ENCODE measurements at regions of chr12 and their contacts with region 1.

Region 1: GRCh38 chr12:11868027-11868426 is 202.7 kb upstream of the BCL2L14 start:
- DNase-seq: peak; percentile 25
- H3K4me3 Mint-ChIP-seq: no peak overlapping the region
- H3K27ac Mint-ChIP-seq: peak overlapping the region; percentile 70
- H3K4me1 Mint-ChIP-seq: peaks cover 51% of the 10 kb centered on the region
- H3K27me3 Mint-ChIP-seq: no peaks in the 10 kb centered on the region

Region 2: GRCh38 chr12:11545484-11546330 is 322.3 kb before region 1 on chr12:
- CTCF ChIA-PET with region 1: no interaction called
- POLR2A ChIA-PET with region 1: no interaction called
- intact Hi-C with region 1: no loop called
- DNase-seq: peak; percentile 59
- H3K4me3 Mint-ChIP-seq: peak overlapping the region; percentile 14
- H3K27ac Mint-ChIP-seq: peak overlapping the region; percentile 72
- H3K4me1 Mint-ChIP-seq: peaks cover 42% of the 10 kb centered on the region
- H3K27me3 Mint-ChIP-seq: no peaks in the 10 kb centered on the region

Region 3: GRCh38 chr12:11877869-11878780 is 10.1 kb after region 1 on chr12:
- CTCF ChIA-PET with region 1: no interaction called
- POLR2A ChIA-PET with region 1: no interaction called
- intact Hi-C with region 1: loop called (anchors 1 kb)
- DNase-seq: peak; percentile 37
- H3K4me3 Mint-ChIP-seq: no peak overlapping the region
- H3K27ac Mint-ChIP-seq: peak overlapping the region; percentile 55
- H3K4me1 Mint-ChIP-seq: peaks cover 51% of the 10 kb centered on the region
- H3K27me3 Mint-ChIP-seq: no peaks in the 10 kb centered on the region